Activated CD8-positive, alpha-beta T cell treated with anti-CD3 and anti-CD28 coated beads for 36 hours (primary cell): ENCODE measurements at regions of chr7 and their contacts with region 1.

Region 1: DNA sequence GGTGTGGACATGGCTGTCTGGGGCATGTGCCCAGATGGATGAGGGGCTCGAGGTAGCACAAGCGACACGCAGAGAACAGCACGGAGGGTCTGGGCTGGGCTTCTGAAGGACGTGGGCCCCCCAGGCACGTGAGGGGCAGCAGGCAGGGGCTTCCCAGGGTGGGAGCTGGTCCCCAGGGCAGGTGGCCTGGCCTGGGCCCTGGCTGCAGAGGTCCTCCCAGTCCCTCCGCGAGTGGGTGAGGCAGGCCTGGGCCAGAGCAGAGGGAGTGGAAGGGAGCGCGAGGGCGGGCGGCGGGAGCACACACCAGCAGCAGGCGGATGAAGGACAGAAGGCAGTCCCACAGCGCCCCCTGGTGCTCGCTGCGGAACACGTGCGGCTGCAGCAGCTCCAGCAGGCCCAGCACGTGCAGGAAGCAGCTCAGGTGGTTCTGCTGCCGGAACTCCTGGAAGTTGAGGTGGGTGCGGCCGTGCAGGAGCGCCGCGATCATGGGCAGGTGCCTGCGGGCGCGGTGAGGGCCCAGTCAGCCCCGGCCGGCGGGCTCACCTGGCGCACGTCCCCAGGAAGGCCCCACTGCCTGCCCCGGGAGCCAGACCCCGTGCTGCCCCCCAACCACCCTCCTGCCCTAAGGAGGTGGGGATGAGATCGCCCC is 14.7 kb upstream of the MICALL2 start:
- DNase-seq: peak; percentile 92
- ATAC-seq: peak; percentile 93
- H3K4me3 Mint-ChIP-seq: no peak overlapping the region
- H3K27ac Mint-ChIP-seq: no peak overlapping the region
- H3K4me1 Mint-ChIP-seq: peaks cover 9% of the 10 kb centered on the region
- H3K27me3 Mint-ChIP-seq: no peaks in the 10 kb centered on the region
- CTCF ChIP-seq: peak; percentile 97

Region 2: DNA sequence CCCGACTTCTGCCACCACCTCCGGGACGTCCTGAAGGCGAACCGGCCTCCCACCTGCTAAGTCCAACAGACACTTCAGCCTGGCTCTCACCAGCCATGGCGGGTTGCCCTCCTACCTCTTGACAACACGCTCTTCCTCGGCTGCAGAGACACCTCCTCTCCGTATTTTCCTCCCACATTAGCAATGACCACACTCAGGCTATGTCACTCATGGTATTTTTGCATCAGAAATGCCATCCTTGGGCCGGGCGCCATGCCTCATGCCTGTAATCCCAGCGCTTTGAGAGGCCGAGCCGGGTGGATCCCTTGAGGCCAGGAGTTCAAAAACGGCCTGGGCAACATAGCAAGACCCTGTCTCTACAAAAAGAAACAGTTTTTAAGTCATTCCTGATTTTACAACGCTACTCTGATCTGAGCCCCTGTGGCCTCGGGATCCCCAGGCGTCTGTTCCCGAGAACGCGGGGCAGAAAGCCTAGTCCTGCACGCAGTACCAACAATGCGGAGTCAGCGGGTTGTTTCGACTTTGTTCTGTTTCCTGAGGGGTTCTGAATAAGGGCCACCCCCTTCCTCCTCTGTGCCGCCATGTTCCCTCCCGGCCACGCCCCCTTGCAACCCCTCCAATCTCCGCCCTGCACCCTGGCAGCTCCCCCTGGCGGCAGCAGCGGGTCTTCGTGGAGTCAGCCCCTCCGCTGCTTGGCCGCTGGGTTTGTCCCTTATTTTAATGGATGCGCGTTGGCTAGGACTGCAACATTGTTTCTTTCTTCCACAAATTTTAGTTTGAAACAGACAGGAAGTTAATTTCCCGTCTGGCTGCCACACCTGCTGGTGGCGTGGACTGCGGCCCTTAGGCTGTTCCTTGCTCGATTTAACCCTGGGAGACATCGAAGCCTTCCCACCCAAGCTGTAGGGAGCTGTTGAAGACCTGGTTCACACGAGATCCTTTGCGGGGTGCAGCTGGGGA is 304.3 kb before region 1 on chr7:
- CTCF ChIA-PET with region 1: no interaction called
- POLR2A ChIA-PET with region 1: no interaction called
- intact Hi-C with region 1: no loop called
- DNase-seq: peak; percentile 97
- ATAC-seq: peak; percentile 99
- H3K4me3 Mint-ChIP-seq: peak overlapping the region; percentile 78
- H3K27ac Mint-ChIP-seq: peak overlapping the region; percentile 92
- H3K4me1 Mint-ChIP-seq: peaks cover 12% of the 10 kb centered on the region
- H3K27me3 Mint-ChIP-seq: no peaks in the 10 kb centered on the region
- CTCF ChIP-seq: peak; percentile 89

Region 3: GRCh38 chr7:1432411-1433082 is 41.4 kb before region 1 on chr7:
- CTCF ChIA-PET with region 1: interaction called, 10 read pairs
- POLR2A ChIA-PET with region 1: no interaction called
- intact Hi-C with region 1: no loop called
- DNase-seq: peak; percentile 84
- ATAC-seq: peak; percentile 98
- H3K4me3 Mint-ChIP-seq: no peak overlapping the region
- H3K27ac Mint-ChIP-seq: no peak overlapping the region
- H3K4me1 Mint-ChIP-seq: peaks cover 3% of the 10 kb centered on the region
- H3K27me3 Mint-ChIP-seq: peaks cover 2% of the 10 kb centered on the region
- CTCF ChIP-seq: peak; percentile 98

Region 4: GRCh38 chr7:1460821-1461645 is 13.0 kb before region 1 on chr7:
- CTCF ChIA-PET with region 1: interaction called, 15 read pairs
- POLR2A ChIA-PET with region 1: no interaction called
- intact Hi-C with region 1: no loop called
- DNase-seq: no peak
- ATAC-seq: no peak
- H3K4me3 Mint-ChIP-seq: no peak overlapping the region
- H3K27ac Mint-ChIP-seq: no peak overlapping the region
- H3K4me1 Mint-ChIP-seq: peaks cover 18% of the 10 kb centered on the region
- H3K27me3 Mint-ChIP-seq: no peaks in the 10 kb centered on the region
- CTCF ChIP-seq: no peak

Region 5: DNA sequence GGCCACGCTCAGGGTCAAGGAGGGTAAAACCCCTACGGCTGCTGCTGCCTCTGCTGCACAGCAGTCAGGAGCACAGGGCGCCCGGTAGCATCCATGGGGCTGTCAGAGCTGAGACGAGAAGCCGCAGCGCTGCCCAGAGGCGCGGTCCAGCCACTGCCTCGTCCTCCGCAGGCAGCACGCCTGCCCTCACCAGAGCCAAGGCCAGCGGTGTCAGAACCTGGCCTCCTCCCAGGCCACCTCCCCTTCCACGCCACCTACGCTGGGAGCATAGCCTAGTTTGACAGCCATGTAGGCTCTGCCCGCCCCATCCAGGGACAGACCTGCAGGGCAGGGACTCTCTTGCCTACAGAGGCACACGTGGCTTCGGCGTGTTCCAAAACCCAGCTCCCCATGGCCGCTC is 14.0 kb after region 1 on chr7:
- CTCF ChIA-PET with region 1: interaction called, 10 read pairs
- POLR2A ChIA-PET with region 1: interaction called, 4 read pairs
- intact Hi-C with region 1: no loop called
- DNase-seq: no peak
- ATAC-seq: no peak
- H3K4me3 Mint-ChIP-seq: no peak overlapping the region
- H3K27ac Mint-ChIP-seq: no peak overlapping the region
- H3K4me1 Mint-ChIP-seq: no peaks in the 10 kb centered on the region
- H3K27me3 Mint-ChIP-seq: no peaks in the 10 kb centered on the region
- CTCF ChIP-seq: no peak

Region 6: DNA sequence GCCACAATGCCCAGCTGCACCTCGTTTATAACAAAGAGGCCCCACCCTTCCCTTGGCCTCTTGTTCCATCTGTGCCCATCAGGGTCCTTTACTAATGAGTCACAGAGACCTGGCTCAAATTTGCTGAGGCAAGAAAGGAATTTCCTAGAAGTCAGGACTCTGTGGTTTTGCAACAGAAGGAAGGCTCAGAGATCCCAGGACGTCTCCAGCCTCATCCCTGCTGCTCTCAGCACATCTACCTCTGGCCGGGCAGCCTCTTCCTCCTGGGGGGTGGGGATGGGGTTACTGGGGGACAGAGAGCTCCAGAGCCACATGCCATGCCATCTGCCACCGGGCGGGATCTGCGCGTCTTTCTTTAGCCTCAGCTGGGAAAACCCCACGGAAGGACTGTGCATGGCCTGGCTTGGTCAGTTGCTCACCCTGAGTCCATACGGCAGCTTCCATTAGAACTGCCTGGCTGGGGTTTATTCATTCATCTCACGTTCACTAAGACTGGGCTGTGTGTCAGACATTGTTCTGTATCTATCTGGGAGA is 137.8 kb after region 1 on chr7:
- CTCF ChIA-PET with region 1: no interaction called
- POLR2A ChIA-PET with region 1: no interaction called
- intact Hi-C with region 1: no loop called
- DNase-seq: no peak
- ATAC-seq: no peak
- H3K4me3 Mint-ChIP-seq: no peak overlapping the region
- H3K27ac Mint-ChIP-seq: no peak overlapping the region
- H3K4me1 Mint-ChIP-seq: peaks cover 3% of the 10 kb centered on the region
- H3K27me3 Mint-ChIP-seq: peaks cover 2% of the 10 kb centered on the region
- CTCF ChIP-seq: no peak